CD8-positive, alpha-beta T cell (primary cell): ENCODE measurements at regions of chr2 and their contacts with region 1.

Region 1: GRCh38 chr2:70094978-70095719 is 7.9 kb downstream of the PCBP1 start:
- DNase-seq: peak in 8 of 9 experiments; percentile 40 to 89 (median 58)
- ATAC-seq: peak; percentile 88
- H3K4me3 ChIP-seq: peak overlapping the region; percentile 35 to 56
- H3K4me3 Mint-ChIP-seq: peak overlapping the region; percentile 78
- H3K27ac ChIP-seq: peak overlapping the region; percentile 59 to 90
- H3K27ac Mint-ChIP-seq: peak overlapping the region; percentile 93
- H3K4me1 ChIP-seq: peaks cover 40% of the 10 kb centered on the region
- H3K4me1 Mint-ChIP-seq: peaks cover 49% of the 10 kb centered on the region
- H3K27me3 ChIP-seq: no peaks in the 10 kb centered on the region
- H3K27me3 Mint-ChIP-seq: no peaks in the 10 kb centered on the region
- CTCF ChIP-seq: no peak

Region 2: GRCh38 chr2:69565431-69565839 is 529.7 kb before region 1 on chr2:
- CTCF ChIA-PET with region 1: no interaction called
- POLR2A ChIA-PET with region 1: no interaction called
- intact Hi-C with region 1: no loop called
- DNase-seq: peak; percentile 43 to 83 (median 73)
- ATAC-seq: peak; percentile 79
- H3K4me3 ChIP-seq: no peak overlapping the region
- H3K4me3 Mint-ChIP-seq: peak overlapping the region; percentile 63
- H3K27ac ChIP-seq: no peak overlapping the region
- H3K27ac Mint-ChIP-seq: peak overlapping the region; percentile 72
- H3K4me1 ChIP-seq: peaks cover 91% of the 10 kb centered on the region
- H3K4me1 Mint-ChIP-seq: peaks cover 92% of the 10 kb centered on the region
- H3K27me3 ChIP-seq: no peaks in the 10 kb centered on the region
- H3K27me3 Mint-ChIP-seq: no peaks in the 10 kb centered on the region
- CTCF ChIP-seq: peak; percentile 80

Region 3: GRCh38 chr2:70124983-70125480 is 29.9 kb after region 1 on chr2:
- CTCF ChIA-PET with region 1: interaction called, 8 read pairs
- POLR2A ChIA-PET with region 1: interaction called, 325 read pairs
- intact Hi-C with region 1: loop called in 1 of 2 experiments (anchors 2 kb)
- DNase-seq: peak; percentile 52 to 85 (median 70)
- ATAC-seq: peak; percentile 64
- H3K4me3 ChIP-seq: peak overlapping the region; percentile 47 to 61
- H3K4me3 Mint-ChIP-seq: peak overlapping the region; percentile 95
- H3K27ac ChIP-seq: peak overlapping the region; percentile 97
- H3K27ac Mint-ChIP-seq: peak overlapping the region; percentile 100
- H3K4me1 ChIP-seq: peaks cover 62% of the 10 kb centered on the region
- H3K4me1 Mint-ChIP-seq: peaks cover 70% of the 10 kb centered on the region
- H3K27me3 ChIP-seq: no peaks in the 10 kb centered on the region
- H3K27me3 Mint-ChIP-seq: no peaks in the 10 kb centered on the region
- CTCF ChIP-seq: no peak